A549 (cell line): ENCODE measurements at regions of chr3 and their contacts with region 1.

Region 1: DNA sequence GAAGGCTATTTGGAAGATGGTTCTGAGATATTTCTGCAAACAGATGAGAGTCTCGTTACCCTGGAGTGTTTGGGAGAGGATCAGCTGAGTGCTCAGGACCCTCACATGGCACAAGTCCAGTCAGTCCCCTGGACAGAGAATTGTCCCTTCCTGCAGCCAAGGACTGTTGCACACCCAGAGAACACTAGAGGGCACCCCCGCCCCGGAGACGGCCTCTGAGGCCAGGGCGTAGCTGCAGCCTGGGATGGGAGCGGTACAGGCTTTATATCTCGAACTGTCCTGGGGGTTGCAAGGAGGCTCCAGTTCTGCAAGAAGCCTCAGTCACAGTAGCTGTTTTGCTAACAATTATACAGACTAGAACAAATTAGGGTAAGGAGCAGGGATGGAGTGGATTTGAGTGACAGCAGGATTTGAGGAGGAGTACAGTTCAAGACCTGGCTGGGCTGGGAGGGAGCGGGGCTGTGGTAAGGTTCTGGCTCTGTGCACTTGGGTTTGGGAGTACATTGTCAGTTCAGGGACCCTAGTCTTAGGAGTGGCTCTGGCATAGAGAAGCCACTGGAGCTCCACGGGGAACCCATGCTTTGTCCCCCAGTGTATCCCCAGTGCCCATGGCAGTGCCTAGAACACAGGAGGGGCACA is 67.6 kb upstream of the HACD2 start:
- DNase-seq: peak; percentile 58 to 86
- ATAC-seq: peak; percentile 94 to 98
- H3K4me3 ChIP-seq: no peak overlapping the region
- H3K27ac ChIP-seq: peak overlapping the region; percentile 69 to 85
- H3K4me1 ChIP-seq: peaks cover 15% of the 10 kb centered on the region
- CTCF ChIP-seq: peak; percentile 94
- EP300 ChIP-seq: no peak
- POLR2A ChIP-seq: no peak
- RAD21 ChIP-seq: peak; percentile 97

Region 2: GRCh38 chr3:123421353-123422174 is 230.9 kb before region 1 on chr3:
- CTCF ChIA-PET with region 1: no interaction called
- POLR2A ChIA-PET with region 1: no interaction called
- DNase-seq: no peak
- ATAC-seq: no peak
- H3K4me3 ChIP-seq: no peak overlapping the region
- H3K27ac ChIP-seq: no peak overlapping the region
- H3K4me1 ChIP-seq: no peaks in the 10 kb centered on the region
- CTCF ChIP-seq: no peak
- EP300 ChIP-seq: no peak
- POLR2A ChIP-seq: no peak
- RAD21 ChIP-seq: no peak

Region 3: DNA sequence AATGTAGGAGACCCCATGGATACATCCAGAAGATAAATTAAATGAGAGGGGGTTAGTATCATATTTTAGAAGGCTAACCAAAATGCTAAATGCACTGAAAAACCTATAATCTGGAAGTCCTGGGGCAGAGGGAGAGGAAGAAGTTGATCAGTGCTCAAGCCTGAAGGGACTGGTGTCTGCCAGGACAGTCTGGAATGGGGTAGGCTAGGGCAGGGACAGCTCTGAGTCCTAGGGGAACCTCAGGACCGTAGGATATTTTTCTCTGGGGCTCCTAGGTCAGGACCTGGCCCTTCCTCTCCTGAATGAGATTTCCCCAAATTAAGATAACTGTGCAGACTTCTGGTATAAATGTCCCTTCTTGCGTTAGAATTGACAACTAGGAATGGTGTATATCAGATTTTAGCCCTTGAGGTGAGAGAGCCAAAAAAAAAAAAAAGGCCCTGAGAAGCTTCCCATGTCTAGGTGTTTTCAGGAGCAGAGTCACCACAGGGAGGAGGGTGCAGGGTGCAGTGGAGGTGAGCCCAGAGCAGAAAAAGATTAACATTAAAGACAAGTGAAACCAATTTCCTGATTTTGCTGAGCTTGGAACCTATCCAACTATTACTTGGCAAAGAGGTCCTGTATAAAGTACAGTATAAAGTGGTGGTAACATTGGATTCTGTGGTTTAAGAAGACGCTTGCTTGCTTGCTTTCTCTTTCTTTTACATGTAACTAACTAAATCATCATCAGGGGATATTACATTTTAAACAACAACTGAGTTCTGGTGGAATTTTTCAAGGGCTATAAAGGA is 131.1 kb before region 1 on chr3:
- CTCF ChIA-PET with region 1: no interaction called
- POLR2A ChIA-PET with region 1: no interaction called
- DNase-seq: no peak
- ATAC-seq: no peak
- H3K4me3 ChIP-seq: no peak overlapping the region
- H3K27ac ChIP-seq: no peak overlapping the region
- H3K4me1 ChIP-seq: no peaks in the 10 kb centered on the region
- CTCF ChIP-seq: no peak
- EP300 ChIP-seq: no peak
- POLR2A ChIP-seq: no peak
- RAD21 ChIP-seq: no peak

Region 4: GRCh38 chr3:123613543-123613942 is 38.9 kb before region 1 on chr3:
- CTCF ChIA-PET with region 1: interaction called, 14 read pairs
- POLR2A ChIA-PET with region 1: no interaction called
- DNase-seq: no peak
- ATAC-seq: no peak
- H3K4me3 ChIP-seq: no peak overlapping the region
- H3K27ac ChIP-seq: no peak overlapping the region
- H3K4me1 ChIP-seq: peaks cover 7% of the 10 kb centered on the region
- CTCF ChIP-seq: no peak
- EP300 ChIP-seq: no peak
- POLR2A ChIP-seq: no peak
- RAD21 ChIP-seq: no peak

Region 5: GRCh38 chr3:123642182-123642956 is 10.1 kb before region 1 on chr3:
- CTCF ChIA-PET with region 1: interaction called, 119 read pairs
- POLR2A ChIA-PET with region 1: no interaction called
- DNase-seq: peak; percentile 79 to 92
- ATAC-seq: peak; percentile 93 to 99
- H3K4me3 ChIP-seq: no peak overlapping the region
- H3K27ac ChIP-seq: no peak overlapping the region
- H3K4me1 ChIP-seq: no peaks in the 10 kb centered on the region
- CTCF ChIP-seq: peak; percentile 85
- EP300 ChIP-seq: no peak
- POLR2A ChIP-seq: no peak
- RAD21 ChIP-seq: peak; percentile 68 to 75

Region 6: DNA sequence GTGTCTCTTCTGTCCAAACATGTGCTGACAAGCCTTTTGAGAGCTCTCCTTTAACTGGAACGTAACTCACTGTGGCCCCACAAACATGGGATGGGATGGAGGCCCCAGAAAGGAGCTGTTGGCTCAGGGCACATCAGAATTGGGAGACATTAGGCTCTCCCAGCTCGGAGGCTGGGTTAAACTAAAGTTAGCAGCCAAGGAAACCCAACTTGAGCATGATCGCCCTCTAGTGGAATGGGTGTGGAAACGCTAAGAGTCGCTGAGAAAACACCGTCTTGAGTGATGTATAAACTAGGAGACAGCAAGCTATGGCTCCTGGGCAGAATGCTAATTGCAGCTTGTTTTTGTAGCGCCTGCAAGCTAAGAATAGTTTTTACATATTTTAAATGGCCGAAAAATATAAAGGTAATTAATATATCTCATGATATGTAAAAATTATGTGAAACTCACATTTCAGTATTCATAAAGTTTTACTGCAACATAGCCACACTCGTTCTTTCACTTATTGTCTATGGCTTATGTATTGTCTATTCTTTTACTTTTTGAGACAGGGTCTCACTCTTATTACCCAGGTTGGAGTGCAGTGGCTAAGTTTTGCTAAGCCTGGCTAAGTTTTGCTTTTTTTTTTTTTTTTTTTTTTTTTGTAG is 71.2 kb after region 1 on chr3:
- CTCF ChIA-PET with region 1: interaction called, 829 read pairs
- POLR2A ChIA-PET with region 1: no interaction called
- DNase-seq: peak; percentile 78 to 84
- ATAC-seq: peak; percentile 79 to 80
- H3K4me3 ChIP-seq: no peak overlapping the region
- H3K27ac ChIP-seq: peak overlapping the region; percentile 56 to 72; a peak in 4 of 6 replicates
- H3K4me1 ChIP-seq: peaks cover 22% of the 10 kb centered on the region
- CTCF ChIP-seq: peak; percentile 74
- EP300 ChIP-seq: no peak
- POLR2A ChIP-seq: no peak
- RAD21 ChIP-seq: peak; percentile 71 to 73

Region 7: GRCh38 chr3:123941121-123941520 is 288.7 kb after region 1 on chr3:
- CTCF ChIA-PET with region 1: interaction called, 11 read pairs
- POLR2A ChIA-PET with region 1: no interaction called
- DNase-seq: no peak
- ATAC-seq: no peak
- H3K4me3 ChIP-seq: no peak overlapping the region
- H3K27ac ChIP-seq: no peak overlapping the region
- H3K4me1 ChIP-seq: no peaks in the 10 kb centered on the region
- CTCF ChIP-seq: peak; percentile 25; the same call in 2 of the 3 replicates
- EP300 ChIP-seq: no peak
- POLR2A ChIP-seq: no peak
- RAD21 ChIP-seq: peak; percentile 20 to 37; a peak in 1 of 5 replicates

Region 8: DNA sequence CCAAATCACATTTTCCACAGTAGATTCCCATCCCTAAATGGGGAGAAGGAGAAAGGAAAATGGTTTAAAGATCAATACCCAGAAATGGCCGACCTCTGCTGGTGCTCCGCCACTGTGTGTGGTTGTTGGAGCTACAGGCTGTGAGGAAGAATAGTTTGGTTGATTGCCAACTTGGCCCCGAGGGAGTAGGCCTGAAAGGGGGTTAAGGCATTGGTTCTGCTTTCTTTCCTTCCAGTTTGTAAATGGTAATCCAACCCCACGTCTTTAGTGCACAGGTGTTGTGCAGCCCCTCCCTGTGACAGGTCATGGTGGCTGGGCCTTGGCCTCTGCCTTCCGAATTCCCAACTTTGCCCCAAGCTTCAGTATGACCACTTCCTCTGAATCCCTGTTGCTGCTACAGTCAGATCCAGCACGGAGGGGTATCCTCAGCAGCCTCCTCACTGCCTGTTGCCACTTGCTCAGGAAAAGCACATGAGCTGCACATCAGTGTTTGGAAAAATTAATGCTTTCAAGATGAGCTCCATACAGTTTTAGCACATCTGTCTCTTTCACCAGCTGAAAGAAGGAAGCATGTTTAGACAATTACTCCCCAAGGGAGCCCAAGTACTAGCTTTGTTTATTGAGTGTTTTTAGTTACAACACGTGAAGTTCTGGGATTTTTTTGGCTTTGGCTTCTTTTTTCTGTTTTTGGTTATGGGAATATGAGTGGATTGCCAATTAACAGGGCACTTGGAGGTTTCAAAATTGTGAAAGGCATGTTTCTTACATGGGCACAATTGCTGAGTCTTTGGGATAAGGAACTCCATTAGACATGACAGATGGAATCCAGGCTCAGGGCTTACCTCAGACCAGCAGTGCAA is 431.8 kb after region 1 on chr3:
- CTCF ChIA-PET with region 1: interaction called, 22 read pairs
- POLR2A ChIA-PET with region 1: no interaction called
- DNase-seq: no peak
- ATAC-seq: no peak
- H3K4me3 ChIP-seq: no peak overlapping the region
- H3K27ac ChIP-seq: no peak overlapping the region
- H3K4me1 ChIP-seq: no peaks in the 10 kb centered on the region
- CTCF ChIP-seq: no peak
- EP300 ChIP-seq: no peak
- POLR2A ChIP-seq: no peak
- RAD21 ChIP-seq: no peak